ENCODE measurements at regions of chr2 and their contacts with region 1.

Region 1: GRCh38 chr2:64644177-64645004 is 9.3 kb downstream of the SERTAD2 start:
- DNase-seq: peak; percentile 76 to 87
- ATAC-seq: peak; percentile 91 to 95 (median 93)
- H3K4me3 ChIP-seq: peak overlapping the region; percentile 41 to 61 (median 55)
- H3K27ac ChIP-seq: peak overlapping the region; percentile 83 to 96 (median 93)
- H3K4me1 ChIP-seq: peaks cover 0 to 91% (median 71%) of the 10 kb centered on the region in 9 donors
- H3K27me3 ChIP-seq: no peaks in the 10 kb centered on the region
- CTCF ChIP-seq: no peak

Region 2: DNA sequence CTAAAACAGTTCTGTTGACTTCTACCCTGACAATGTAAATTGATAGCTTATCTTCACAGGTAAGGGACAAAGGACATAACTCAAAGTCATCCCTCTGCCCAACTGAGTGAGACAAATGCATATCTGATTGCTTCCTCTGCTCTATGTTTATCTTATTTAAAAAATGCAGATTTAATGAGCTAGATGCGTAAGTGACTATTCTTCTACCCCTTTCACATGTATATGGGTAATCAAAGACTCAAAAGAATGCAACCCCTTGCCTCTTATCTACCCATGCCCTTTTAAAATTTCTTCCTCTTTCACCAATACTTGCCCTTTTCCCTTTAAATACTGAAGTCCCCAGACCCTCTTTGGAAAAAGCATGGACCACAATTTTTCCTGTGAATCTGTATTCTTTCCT is 1309.5 kb before region 1 on chr2:
- intact Hi-C with region 1: no loop called
- DNase-seq: no peak
- ATAC-seq: no peak
- H3K4me3 ChIP-seq: no peak overlapping the region
- H3K27ac ChIP-seq: no peak overlapping the region
- H3K4me1 ChIP-seq: no peaks in the 10 kb centered on the region
- H3K27me3 ChIP-seq: no peaks in the 10 kb centered on the region
- CTCF ChIP-seq: no peak

Region 3: GRCh38 chr2:64514008-64514407 is 130.4 kb before region 1 on chr2:
- intact Hi-C with region 1: no loop called
- DNase-seq: no peak
- ATAC-seq: no peak
- H3K4me3 ChIP-seq: no peak overlapping the region
- H3K27ac ChIP-seq: no peak overlapping the region
- H3K4me1 ChIP-seq: no peaks in the 10 kb centered on the region
- H3K27me3 ChIP-seq: peaks cover 0 to 7% (median 0%) of the 10 kb centered on the region in 7 donors
- CTCF ChIP-seq: no peak

Region 4: GRCh38 chr2:64586883-64587481 is 57.4 kb before region 1 on chr2:
- intact Hi-C with region 1: loop called in 1 of 10 experiments (anchors 2 kb)
- DNase-seq: no peak
- ATAC-seq: peak in 6 of 8 donors; percentile 55 to 77 (median 65)
- H3K4me3 ChIP-seq: no peak overlapping the region
- H3K27ac ChIP-seq: no peak overlapping the region
- H3K4me1 ChIP-seq: peaks cover 0 to 13% (median 8%) of the 10 kb centered on the region in 9 donors
- H3K27me3 ChIP-seq: no peaks in the 10 kb centered on the region
- CTCF ChIP-seq: peak; percentile 27 to 80 (median 65)

Region 5: DNA sequence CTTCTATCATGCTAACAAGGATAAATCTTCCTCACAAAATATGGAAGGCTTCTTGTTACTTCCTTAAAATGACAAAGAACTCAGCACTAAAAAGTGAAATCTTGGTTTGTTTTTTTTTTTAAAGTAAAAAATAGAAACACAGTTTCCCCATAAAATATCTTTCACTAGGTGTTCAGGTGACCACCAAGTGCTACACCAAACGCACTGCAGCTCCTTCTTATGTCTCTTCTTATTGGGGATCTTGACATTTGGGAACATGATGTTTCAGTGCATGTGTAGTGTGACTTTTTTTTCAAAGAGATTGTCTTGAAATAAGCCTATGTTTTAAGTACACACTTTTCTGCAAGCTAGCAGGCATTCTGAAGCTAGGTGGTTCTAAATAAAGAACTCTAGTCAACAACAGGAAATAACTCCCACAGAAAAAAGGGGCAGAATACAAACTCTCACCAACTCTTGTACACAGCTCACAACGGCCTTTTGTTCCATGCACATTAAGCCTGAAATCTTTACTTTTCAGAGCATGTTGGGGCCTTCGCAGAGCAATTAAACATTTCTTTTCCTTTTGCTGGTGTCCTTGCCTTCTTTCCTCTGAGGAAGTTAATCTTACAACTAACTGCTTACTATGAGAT is 22.5 kb after region 1 on chr2:
- intact Hi-C with region 1: no loop called
- DNase-seq: no peak
- ATAC-seq: peak in 2 of 8 donors; percentile 39 to 44
- H3K4me3 ChIP-seq: no peak overlapping the region
- H3K27ac ChIP-seq: peak overlapping the region in 4 of 10 donors; percentile 35 to 68 (median 48)
- H3K4me1 ChIP-seq: peaks cover 0 to 29% (median 17%) of the 10 kb centered on the region in 9 donors
- H3K27me3 ChIP-seq: no peaks in the 10 kb centered on the region
- CTCF ChIP-seq: no peak

Region 6: GRCh38 chr2:64750817-64751285 is 106.5 kb after region 1 on chr2:
- intact Hi-C with region 1: loop called in 2 of 10 experiments (anchors 2 to 5 kb)
- DNase-seq: peak; percentile 99
- ATAC-seq: peak; percentile 90 to 97 (median 94)
- H3K4me3 ChIP-seq: peak overlapping the region; percentile 59 to 94 (median 74)
- H3K27ac ChIP-seq: peak overlapping the region; percentile 82 to 100 (median 96)
- H3K4me1 ChIP-seq: peaks cover 0 to 34% (median 19%) of the 10 kb centered on the region in 9 donors
- H3K27me3 ChIP-seq: no peaks in the 10 kb centered on the region
- CTCF ChIP-seq: peak in 3 of 9 donors; percentile 37 to 53 (median 40)

Region 7: GRCh38 chr2:64831134-64831976 is 187.0 kb after region 1 on chr2:
- intact Hi-C with region 1: loop called in 2 of 10 experiments (anchors 1 to 10 kb)
- DNase-seq: peak; percentile 80 to 82
- ATAC-seq: peak; percentile 86 to 98 (median 94)
- H3K4me3 ChIP-seq: peak overlapping the region in 2 of 10 donors; percentile 15 to 23
- H3K27ac ChIP-seq: peak overlapping the region in 9 of 10 donors; percentile 11 to 87 (median 70)
- H3K4me1 ChIP-seq: peaks cover 0 to 17% (median 11%) of the 10 kb centered on the region in 9 donors
- H3K27me3 ChIP-seq: no peaks in the 10 kb centered on the region
- CTCF ChIP-seq: peak; percentile 83 to 95 (median 89)

Region 8: DNA sequence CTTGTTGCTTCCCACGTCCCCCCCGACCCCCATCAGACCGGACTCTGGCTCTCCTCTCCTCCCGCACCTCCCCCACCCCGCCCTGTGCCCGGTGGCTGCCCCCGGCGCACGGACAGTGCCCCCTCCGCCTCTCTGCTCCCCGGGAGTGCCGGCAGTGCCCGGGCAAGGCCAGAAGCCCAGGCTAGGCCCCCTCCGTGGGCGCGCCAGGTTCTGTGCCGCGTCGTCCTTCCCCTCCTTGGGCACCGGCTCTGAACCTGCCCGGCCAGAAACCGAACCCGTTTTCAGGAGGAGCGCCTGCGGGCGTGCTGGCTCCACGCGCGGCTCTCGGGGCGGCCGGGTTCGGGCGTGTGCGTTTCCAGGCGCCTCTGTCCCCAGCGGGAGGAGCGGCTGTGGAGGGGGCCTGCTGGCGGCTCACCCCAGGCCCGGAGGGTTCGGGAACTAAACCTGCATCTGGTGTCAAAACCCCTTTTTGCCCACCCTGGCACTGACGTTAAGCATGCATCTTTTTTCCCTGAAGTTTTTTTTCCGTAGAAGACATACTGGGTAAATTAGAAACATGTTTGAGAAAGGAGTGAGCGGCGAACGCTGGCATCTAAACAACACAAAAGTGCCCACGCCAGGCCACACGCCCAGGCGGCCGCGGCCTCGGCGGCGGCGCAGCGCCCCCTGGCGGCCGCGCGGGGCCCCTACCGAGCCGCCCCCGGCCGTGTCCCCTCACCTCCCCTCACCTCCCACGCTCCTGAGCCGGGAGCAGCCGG is 220.9 kb after region 1 on chr2:
- intact Hi-C with region 1: loop called in 9 of 10 experiments (anchors 1 to 5 kb)
- DNase-seq: peak; percentile 53 to 68
- ATAC-seq: peak; percentile 75 to 93 (median 87)
- H3K4me3 ChIP-seq: peak overlapping the region; percentile 51 to 99 (median 79)
- H3K27ac ChIP-seq: peak overlapping the region; percentile 78 to 97 (median 91)
- H3K4me1 ChIP-seq: peaks cover 0 to 60% (median 8%) of the 10 kb centered on the region in 9 donors
- H3K27me3 ChIP-seq: no peaks in the 10 kb centered on the region
- CTCF ChIP-seq: peak in 8 of 9 donors; percentile 50 to 99 (median 67)